Activated CD4-positive, alpha-beta memory T cell treated with anti-CD3 and anti-CD28 coated beads, Interleukin-2, amount 10 ng/mL, durations not matched to agents 7 days and 5 days (primary cell): ENCODE measurements at regions of chr10 and their contacts with region 1.

Region 1: DNA sequence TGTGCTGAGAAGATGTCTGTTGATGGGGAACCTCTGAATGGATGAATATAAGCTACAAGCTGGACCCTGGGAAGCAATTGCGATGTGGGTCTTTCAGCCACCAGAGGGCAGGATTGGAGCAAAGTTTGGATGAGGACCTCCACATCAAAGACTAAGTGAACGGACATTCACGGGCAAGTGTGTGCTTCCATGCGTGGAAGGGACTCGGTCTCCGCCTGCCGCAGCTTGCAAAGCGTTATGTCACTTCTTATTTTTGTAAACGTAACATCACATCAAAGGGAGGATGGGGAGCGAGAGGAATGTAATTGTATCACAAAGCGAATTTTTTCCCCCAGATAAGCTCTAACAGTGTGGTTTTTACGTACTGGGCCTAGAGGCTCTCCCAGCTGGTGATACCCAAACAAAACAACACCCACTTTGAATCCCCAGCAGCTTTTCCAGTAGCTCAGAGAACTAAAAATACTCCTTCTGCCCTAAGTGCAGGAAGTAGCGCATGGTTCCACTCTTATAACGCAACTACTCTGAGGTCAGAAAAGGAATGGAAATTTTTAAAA is 65.0 kb downstream of the VWA2 start:
- DNase-seq: peak; percentile 77
- H3K4me3 Mint-ChIP-seq: peak overlapping the region; percentile 75
- H3K27ac Mint-ChIP-seq: peak overlapping the region; percentile 24
- H3K4me1 Mint-ChIP-seq: peaks cover 13% of the 10 kb centered on the region
- H3K27me3 Mint-ChIP-seq: no peaks in the 10 kb centered on the region

Region 2: DNA sequence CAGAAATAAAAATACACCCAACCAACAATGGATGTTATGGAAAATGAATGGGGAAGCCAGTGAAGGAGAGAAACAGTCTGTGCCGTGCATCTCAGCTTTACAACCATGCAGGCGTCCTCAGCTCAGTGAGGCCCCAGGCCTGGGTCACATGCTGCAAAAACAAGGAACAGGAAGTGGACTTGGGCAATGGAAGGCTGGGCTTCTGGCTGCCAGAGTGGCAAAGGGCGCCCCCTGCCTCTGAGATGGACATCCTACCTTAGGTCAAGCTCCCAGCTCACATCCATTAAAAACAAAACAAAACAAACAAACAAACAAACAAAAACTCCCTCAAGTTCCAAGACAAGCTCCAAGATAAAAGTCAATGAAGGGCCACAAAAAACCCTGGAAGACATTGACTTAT is 154.9 kb after region 1 on chr10:
- CTCF ChIA-PET with region 1: interaction called, 21 read pairs
- POLR2A ChIA-PET with region 1: interaction called, 4 read pairs
- DNase-seq: peak; percentile 33
- H3K4me3 Mint-ChIP-seq: no peak overlapping the region
- H3K27ac Mint-ChIP-seq: no peak overlapping the region
- H3K4me1 Mint-ChIP-seq: peaks cover 4% of the 10 kb centered on the region
- H3K27me3 Mint-ChIP-seq: no peaks in the 10 kb centered on the region

Region 3: GRCh38 chr10:114550756-114551635 is 246.9 kb after region 1 on chr10:
- CTCF ChIA-PET with region 1: interaction called, 11 read pairs
- POLR2A ChIA-PET with region 1: no interaction called
- DNase-seq: no peak
- H3K4me3 Mint-ChIP-seq: no peak overlapping the region
- H3K27ac Mint-ChIP-seq: no peak overlapping the region
- H3K4me1 Mint-ChIP-seq: peaks cover 23% of the 10 kb centered on the region
- H3K27me3 Mint-ChIP-seq: no peaks in the 10 kb centered on the region

Region 4: DNA sequence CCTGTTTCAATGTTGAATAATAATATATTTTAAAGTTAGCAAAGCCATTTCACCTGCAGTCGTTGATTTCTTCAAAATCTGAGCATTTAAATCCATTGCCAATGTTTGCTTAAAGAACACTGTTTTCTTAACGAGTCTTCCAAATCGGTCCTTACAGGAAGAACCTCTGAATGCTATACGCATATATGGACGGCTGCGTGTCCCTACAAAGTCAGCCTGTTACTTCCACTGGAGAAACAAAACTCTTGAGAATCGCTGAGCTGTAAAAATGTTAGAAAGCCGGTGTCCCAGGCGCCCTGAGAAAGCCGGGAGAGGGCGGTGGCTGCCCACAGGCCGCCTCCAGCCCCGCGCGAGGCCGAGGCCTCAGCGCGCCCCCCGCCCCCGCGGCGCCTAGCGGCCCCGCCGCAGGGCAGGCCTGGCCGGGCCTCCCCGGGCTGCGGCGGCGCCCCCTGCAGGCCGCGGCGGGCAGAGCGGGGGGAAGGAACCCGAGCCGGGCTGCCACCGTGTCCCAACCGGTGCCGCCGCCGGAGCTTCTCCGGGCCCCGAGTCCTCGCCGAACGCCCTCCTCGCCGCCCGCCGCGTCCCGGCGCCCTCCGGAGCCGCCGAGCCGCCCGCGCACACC is 517.3 kb after region 1 on chr10 and contains the start of gene FHIP2A:
- CTCF ChIA-PET with region 1: interaction called, 11 read pairs
- POLR2A ChIA-PET with region 1: no interaction called
- DNase-seq: peak; percentile 85
- H3K4me3 Mint-ChIP-seq: peak within 1 kb of the TSS; percentile 86
- H3K27ac Mint-ChIP-seq: peak within 1 kb of the TSS; percentile 95
- H3K4me1 Mint-ChIP-seq: peaks cover 42% of the 10 kb centered on the region
- H3K27me3 Mint-ChIP-seq: peaks cover 10% of the 10 kb centered on the region
- total RNA-seq, gene FHIP2A: 34.3 to 39.2 TPM

Region 5: DNA sequence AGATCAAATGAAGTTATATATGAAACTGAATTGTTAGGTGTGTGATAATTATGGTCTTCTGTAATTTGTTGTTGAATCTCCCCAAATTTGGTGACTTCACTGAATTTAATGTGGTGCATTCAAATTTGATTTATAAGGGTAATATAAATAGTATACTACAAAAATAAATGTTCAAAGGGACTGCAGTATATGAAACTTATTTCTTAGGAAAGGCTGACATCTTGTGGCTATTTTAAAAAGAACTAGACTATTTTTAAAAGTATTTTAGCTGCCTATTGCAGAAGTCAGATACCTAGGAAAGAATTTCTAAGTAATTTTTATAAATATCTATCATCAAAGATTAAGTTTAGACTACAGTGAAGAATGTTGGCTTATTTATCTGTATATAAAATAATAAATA is 825.7 kb after region 1 on chr10:
- CTCF ChIA-PET with region 1: interaction called, 13 read pairs
- POLR2A ChIA-PET with region 1: no interaction called
- DNase-seq: no peak
- H3K4me3 Mint-ChIP-seq: no peak overlapping the region
- H3K27ac Mint-ChIP-seq: no peak overlapping the region
- H3K4me1 Mint-ChIP-seq: no peaks in the 10 kb centered on the region
- H3K27me3 Mint-ChIP-seq: peaks cover 12% of the 10 kb centered on the region